Aorta (tissue), 5 donors: ENCODE measurements at regions of chr12 and their contacts with region 1.

Region 1: GRCh38 chr12:65450625-65451024 is 172.1 kb downstream of the MSRB3 start:
- DNase-seq: no peak
- ATAC-seq: no peak
- H3K4me3 ChIP-seq: no peak overlapping the region
- H3K27ac ChIP-seq: no peak overlapping the region
- H3K4me1 ChIP-seq: peaks cover 0 to 2% of the 10 kb centered on the region in 2 donors
- H3K27me3 ChIP-seq: no peaks in the 10 kb centered on the region

Region 2: GRCh38 chr12:65335021-65335714 is 115.5 kb before region 1 on chr12:
- intact Hi-C with region 1: loop called in 1 of 2 experiments (anchors 10 kb)
- DNase-seq: no peak
- ATAC-seq: peak; percentile 79
- H3K4me3 ChIP-seq: no peak overlapping the region
- H3K27ac ChIP-seq: no peak overlapping the region
- H3K4me1 ChIP-seq: no peaks in the 10 kb centered on the region
- H3K27me3 ChIP-seq: no peaks in the 10 kb centered on the region

Region 3: GRCh38 chr12:65415826-65416225 is 34.8 kb before region 1 on chr12:
- intact Hi-C with region 1: loop called in 1 of 2 experiments (anchors 5 kb)
- DNase-seq: no peak
- ATAC-seq: no peak
- H3K4me3 ChIP-seq: no peak overlapping the region
- H3K27ac ChIP-seq: no peak overlapping the region
- H3K4me1 ChIP-seq: no peaks in the 10 kb centered on the region
- H3K27me3 ChIP-seq: no peaks in the 10 kb centered on the region